Natural killer cell (primary cell): ENCODE measurements at regions of chr2 and their contacts with region 1.

Region 1: DNA sequence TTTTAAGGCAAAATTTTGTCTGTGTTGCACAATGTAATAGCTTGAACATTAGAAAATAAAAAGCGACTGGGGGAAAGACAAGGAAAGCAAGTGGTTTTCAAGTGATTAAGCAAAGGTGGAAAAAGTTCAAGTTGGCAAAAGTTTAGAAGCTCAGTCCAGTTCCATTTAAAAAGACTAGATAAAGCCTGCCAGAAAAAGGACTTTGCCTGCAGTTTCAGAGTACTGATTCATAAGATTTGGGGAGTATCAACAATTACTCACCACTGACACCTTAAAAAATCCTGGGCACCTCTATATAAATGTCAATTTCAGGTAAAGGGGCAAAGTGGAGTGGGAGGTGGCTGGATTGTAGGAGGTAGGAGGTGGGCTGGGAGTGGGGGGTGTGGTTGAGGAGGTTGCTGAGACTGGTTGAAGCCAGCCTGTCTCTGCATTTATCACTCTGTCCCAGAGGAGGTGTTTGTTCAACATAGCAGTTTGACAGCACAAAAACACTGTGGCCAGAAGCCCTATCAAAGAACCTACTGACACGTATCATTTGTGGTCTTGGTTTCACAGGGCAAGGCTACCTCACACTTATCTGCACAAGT is 14.6 kb downstream of the ZEB2 start:
- DNase-seq: peak; percentile 69 to 76
- ATAC-seq: peak; percentile 49 to 73 (median 68)
- H3K4me3 ChIP-seq: no peak overlapping the region
- H3K4me3 Mint-ChIP-seq: peak overlapping the region; percentile 95
- H3K27ac ChIP-seq: peak overlapping the region; percentile 92
- H3K27ac Mint-ChIP-seq: no peak overlapping the region
- H3K4me1 ChIP-seq: peaks cover 43% of the 10 kb centered on the region
- H3K4me1 Mint-ChIP-seq: peaks cover 91 to 97% of the 10 kb centered on the region in 2 donors
- H3K27me3 ChIP-seq: no peaks in the 10 kb centered on the region
- H3K27me3 Mint-ChIP-seq: peaks cover 0 to 2% of the 10 kb centered on the region in 2 donors
- CTCF ChIP-seq: no peak

Region 2: DNA sequence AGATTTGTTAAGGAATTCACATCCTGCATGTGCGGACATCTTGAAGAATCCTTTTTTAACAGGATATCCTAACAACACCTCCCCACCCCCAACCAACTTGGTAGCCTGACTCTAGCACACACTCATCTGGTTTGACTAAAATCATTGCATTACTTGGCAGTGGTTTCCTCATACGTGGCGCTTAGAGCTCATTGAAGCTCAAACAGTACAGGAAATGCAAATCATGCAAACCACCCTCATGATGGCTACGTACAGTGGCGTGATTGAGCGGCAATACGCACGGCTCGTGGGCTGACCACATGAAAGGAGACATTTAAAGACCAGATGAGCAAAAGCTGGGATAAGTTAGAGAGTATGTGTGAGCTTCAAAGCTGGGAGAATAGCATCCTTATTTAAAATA is 321.6 kb before region 1 on chr2:
- intact Hi-C with region 1: loop called (anchors 5 kb)
- DNase-seq: peak; percentile 63 to 92
- ATAC-seq: peak; percentile 96 to 97 (median 96)
- H3K4me3 ChIP-seq: peak overlapping the region; percentile 15
- H3K4me3 Mint-ChIP-seq: peak overlapping the region; percentile 86
- H3K27ac ChIP-seq: peak overlapping the region; percentile 61
- H3K27ac Mint-ChIP-seq: peak overlapping the region; percentile 88 to 90
- H3K4me1 ChIP-seq: no peaks in the 10 kb centered on the region
- H3K4me1 Mint-ChIP-seq: peaks cover 24 to 30% of the 10 kb centered on the region in 2 donors
- H3K27me3 ChIP-seq: no peaks in the 10 kb centered on the region
- H3K27me3 Mint-ChIP-seq: no peaks in the 10 kb centered on the region
- CTCF ChIP-seq: no peak

Region 3: GRCh38 chr2:144382849-144383248 is 122.5 kb before region 1 on chr2:
- intact Hi-C with region 1: loop called (anchors 5 kb)
- DNase-seq: peak in 1 of 2 donors; percentile 76
- ATAC-seq: peak; percentile 86 to 96 (median 91)
- H3K4me3 ChIP-seq: no peak overlapping the region
- H3K4me3 Mint-ChIP-seq: peak overlapping the region; percentile 36
- H3K27ac ChIP-seq: peak overlapping the region; percentile 2
- H3K27ac Mint-ChIP-seq: peak overlapping the region; percentile 61 to 87
- H3K4me1 ChIP-seq: peaks cover 10% of the 10 kb centered on the region
- H3K4me1 Mint-ChIP-seq: peaks cover 58 to 65% of the 10 kb centered on the region in 2 donors
- H3K27me3 ChIP-seq: no peaks in the 10 kb centered on the region
- H3K27me3 Mint-ChIP-seq: no peaks in the 10 kb centered on the region
- CTCF ChIP-seq: no peak

Region 4: DNA sequence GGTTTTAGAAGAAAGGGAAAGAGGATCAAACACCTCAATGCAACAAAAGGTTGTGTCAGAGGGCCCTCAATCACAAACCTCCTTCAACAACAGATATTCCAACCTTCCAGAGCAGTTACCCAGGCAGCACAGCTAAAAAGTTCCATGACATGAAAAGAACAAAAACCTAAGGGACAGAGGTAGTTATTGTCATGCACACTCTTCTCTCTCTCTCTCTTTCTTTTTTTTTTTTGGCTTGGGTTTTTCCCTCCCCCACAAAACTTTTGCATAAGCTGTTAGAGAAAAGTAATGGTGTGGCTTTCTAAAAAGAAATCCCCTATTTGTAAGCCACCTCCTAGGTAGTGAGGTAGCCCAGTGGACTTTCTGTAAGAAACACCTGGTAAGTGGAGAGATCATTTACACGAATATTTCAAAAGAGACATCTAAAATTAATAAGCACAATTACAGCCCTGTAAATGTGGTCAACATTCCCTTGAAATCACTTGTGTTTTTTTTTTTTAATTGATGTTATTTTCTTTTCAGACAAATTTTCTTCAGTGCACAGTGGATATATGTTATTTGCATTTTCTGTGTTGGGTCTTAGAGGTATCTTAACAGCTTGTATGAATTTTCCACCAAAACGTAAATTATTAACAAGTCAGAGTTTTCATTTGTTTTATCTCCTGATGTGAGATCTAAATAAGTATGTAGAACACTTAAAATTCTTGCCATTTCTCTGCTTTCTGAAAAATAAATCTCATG is 33.9 kb before region 1 on chr2:
- intact Hi-C with region 1: loop called (anchors 1 kb)
- DNase-seq: peak in 1 of 2 donors; percentile 70
- ATAC-seq: peak; percentile 61 to 66 (median 64)
- H3K4me3 ChIP-seq: no peak overlapping the region
- H3K4me3 Mint-ChIP-seq: no peak overlapping the region
- H3K27ac ChIP-seq: peak overlapping the region; percentile 35
- H3K27ac Mint-ChIP-seq: no peak overlapping the region
- H3K4me1 ChIP-seq: peaks cover 26% of the 10 kb centered on the region
- H3K4me1 Mint-ChIP-seq: peaks cover 39 to 51% of the 10 kb centered on the region in 2 donors
- H3K27me3 ChIP-seq: no peaks in the 10 kb centered on the region
- H3K27me3 Mint-ChIP-seq: no peaks in the 10 kb centered on the region
- CTCF ChIP-seq: no peak

Region 5: GRCh38 chr2:144516981-144517865 is 11.9 kb after region 1 on chr2:
- intact Hi-C with region 1: loop called (anchors 1 kb)
- DNase-seq: peak; percentile 67 to 80
- ATAC-seq: peak; percentile 54 to 75 (median 68)
- H3K4me3 ChIP-seq: peak overlapping the region; percentile 85
- H3K4me3 Mint-ChIP-seq: no peak overlapping the region
- H3K27ac ChIP-seq: peak overlapping the region; percentile 99
- H3K27ac Mint-ChIP-seq: no peak overlapping the region
- H3K4me1 ChIP-seq: peaks cover 28% of the 10 kb centered on the region
- H3K4me1 Mint-ChIP-seq: peaks cover 39% of the 10 kb centered on the region in 2 donors
- H3K27me3 ChIP-seq: no peaks in the 10 kb centered on the region
- H3K27me3 Mint-ChIP-seq: peaks cover 0 to 5% of the 10 kb centered on the region in 2 donors
- CTCF ChIP-seq: no peak

Region 6: GRCh38 chr2:145207884-145208283 is 702.5 kb after region 1 on chr2:
- intact Hi-C with region 1: no loop called
- DNase-seq: no peak
- ATAC-seq: no peak
- H3K4me3 ChIP-seq: no peak overlapping the region
- H3K4me3 Mint-ChIP-seq: no peak overlapping the region
- H3K27ac ChIP-seq: no peak overlapping the region
- H3K27ac Mint-ChIP-seq: no peak overlapping the region
- H3K4me1 ChIP-seq: no peaks in the 10 kb centered on the region
- H3K4me1 Mint-ChIP-seq: no peaks in the 10 kb centered on the region
- H3K27me3 ChIP-seq: no peaks in the 10 kb centered on the region
- H3K27me3 Mint-ChIP-seq: peaks cover 0 to 6% of the 10 kb centered on the region in 2 donors
- CTCF ChIP-seq: no peak